CD8-positive, alpha-beta T cell (primary cell): ENCODE measurements at regions of chr19 and their contacts with region 1.

Region 1: GRCh38 chr19:43519436-43520088 is 7.4 kb downstream of the ETHE1 start:
- DNase-seq: peak; percentile 57 to 88 (median 82)
- ATAC-seq: peak; percentile 95
- H3K4me3 ChIP-seq: no peak overlapping the region
- H3K4me3 Mint-ChIP-seq: no peak overlapping the region
- H3K27ac ChIP-seq: no peak overlapping the region
- H3K27ac Mint-ChIP-seq: no peak overlapping the region
- H3K4me1 ChIP-seq: peaks cover 10% of the 10 kb centered on the region
- H3K4me1 Mint-ChIP-seq: peaks cover 13% of the 10 kb centered on the region
- H3K27me3 ChIP-seq: no peaks in the 10 kb centered on the region
- H3K27me3 Mint-ChIP-seq: no peaks in the 10 kb centered on the region
- CTCF ChIP-seq: peak; percentile 87

Region 2: DNA sequence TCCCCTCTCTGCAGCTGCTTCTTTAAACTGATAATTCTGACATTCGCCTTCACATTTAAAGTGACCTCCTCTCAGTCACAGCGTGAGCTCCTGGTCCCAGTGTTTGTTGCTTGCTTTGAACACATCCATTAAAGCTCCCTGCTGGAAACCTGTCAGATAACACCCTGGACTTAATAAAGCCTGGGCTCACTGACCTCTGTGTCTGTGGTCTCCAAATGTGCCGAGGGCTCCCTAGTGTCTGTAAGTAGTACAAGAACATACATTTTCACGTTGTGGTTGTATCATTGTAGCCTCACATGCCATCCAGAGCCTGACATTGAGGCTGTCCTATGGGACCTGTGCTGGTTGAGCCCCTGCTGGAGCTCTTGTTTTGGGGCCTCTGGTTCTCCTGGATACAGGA is 311.6 kb before region 1 on chr19:
- CTCF ChIA-PET with region 1: no interaction called
- POLR2A ChIA-PET with region 1: no interaction called
- intact Hi-C with region 1: loop called in 1 of 2 experiments (anchors 5 kb)
- DNase-seq: no peak
- ATAC-seq: no peak
- H3K4me3 ChIP-seq: no peak overlapping the region
- H3K4me3 Mint-ChIP-seq: no peak overlapping the region
- H3K27ac ChIP-seq: no peak overlapping the region
- H3K27ac Mint-ChIP-seq: no peak overlapping the region
- H3K4me1 ChIP-seq: no peaks in the 10 kb centered on the region
- H3K4me1 Mint-ChIP-seq: no peaks in the 10 kb centered on the region
- H3K27me3 ChIP-seq: no peaks in the 10 kb centered on the region
- H3K27me3 Mint-ChIP-seq: peaks cover 31% of the 10 kb centered on the region
- CTCF ChIP-seq: no peak

Region 3: DNA sequence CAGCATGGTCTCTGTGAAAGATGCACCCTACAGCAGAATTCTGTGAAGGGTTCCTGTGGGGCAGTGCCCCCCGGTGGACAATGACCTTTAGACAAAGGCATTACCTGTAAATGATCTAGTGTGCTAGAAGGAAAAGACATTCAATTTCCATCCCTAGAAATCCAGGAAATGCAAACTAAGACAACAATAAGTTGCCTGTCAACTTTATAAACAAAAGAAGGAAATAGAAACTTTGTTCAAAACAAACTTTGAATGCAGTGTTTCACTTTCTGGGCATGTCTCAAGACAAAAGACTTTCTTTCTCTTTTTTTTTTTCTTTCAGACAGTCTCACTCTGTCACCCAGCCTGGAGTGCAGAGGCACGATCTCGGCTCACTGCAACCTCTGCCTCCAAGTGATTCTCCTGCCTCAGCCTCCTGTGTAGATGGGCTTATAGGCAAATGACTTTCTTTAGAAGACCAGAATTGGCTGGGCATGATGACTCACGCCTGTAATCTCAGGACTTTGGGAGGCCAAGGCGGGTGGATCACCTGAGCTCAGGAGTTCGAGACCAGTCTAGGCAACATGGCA is 89.3 kb before region 1 on chr19:
- CTCF ChIA-PET with region 1: interaction called, 158 read pairs
- POLR2A ChIA-PET with region 1: interaction called, 6 read pairs
- intact Hi-C with region 1: loop called (anchors 1 kb)
- DNase-seq: peak in 1 of 9 experiments; percentile 48
- ATAC-seq: no peak
- H3K4me3 ChIP-seq: no peak overlapping the region
- H3K4me3 Mint-ChIP-seq: no peak overlapping the region
- H3K27ac ChIP-seq: no peak overlapping the region
- H3K27ac Mint-ChIP-seq: no peak overlapping the region
- H3K4me1 ChIP-seq: peaks cover 7% of the 10 kb centered on the region
- H3K4me1 Mint-ChIP-seq: peaks cover 18% of the 10 kb centered on the region
- H3K27me3 ChIP-seq: no peaks in the 10 kb centered on the region
- H3K27me3 Mint-ChIP-seq: no peaks in the 10 kb centered on the region
- CTCF ChIP-seq: no peak

Region 4: GRCh38 chr19:43446746-43447489 is 72.6 kb before region 1 on chr19:
- CTCF ChIA-PET with region 1: interaction called, 369 read pairs
- POLR2A ChIA-PET with region 1: interaction called, 36 read pairs
- intact Hi-C with region 1: loop called (anchors 1 kb)
- DNase-seq: peak; percentile 58 to 91 (median 82)
- ATAC-seq: peak; percentile 89
- H3K4me3 ChIP-seq: no peak overlapping the region
- H3K4me3 Mint-ChIP-seq: no peak overlapping the region
- H3K27ac ChIP-seq: no peak overlapping the region
- H3K27ac Mint-ChIP-seq: peak overlapping the region; percentile 87
- H3K4me1 ChIP-seq: peaks cover 5% of the 10 kb centered on the region
- H3K4me1 Mint-ChIP-seq: peaks cover 23% of the 10 kb centered on the region
- H3K27me3 ChIP-seq: no peaks in the 10 kb centered on the region
- H3K27me3 Mint-ChIP-seq: no peaks in the 10 kb centered on the region
- CTCF ChIP-seq: peak; percentile 97

Region 5: GRCh38 chr19:43457809-43458208 is 61.8 kb before region 1 on chr19:
- CTCF ChIA-PET with region 1: interaction called, 27 read pairs
- POLR2A ChIA-PET with region 1: interaction called, 10 read pairs
- intact Hi-C with region 1: no loop called
- DNase-seq: no peak
- ATAC-seq: no peak
- H3K4me3 ChIP-seq: no peak overlapping the region
- H3K4me3 Mint-ChIP-seq: no peak overlapping the region
- H3K27ac ChIP-seq: no peak overlapping the region
- H3K27ac Mint-ChIP-seq: no peak overlapping the region
- H3K4me1 ChIP-seq: peaks cover 8% of the 10 kb centered on the region
- H3K4me1 Mint-ChIP-seq: peaks cover 18% of the 10 kb centered on the region
- H3K27me3 ChIP-seq: no peaks in the 10 kb centered on the region
- H3K27me3 Mint-ChIP-seq: no peaks in the 10 kb centered on the region
- CTCF ChIP-seq: no peak

Region 6: GRCh38 chr19:43474986-43475705 is 44.4 kb before region 1 on chr19:
- CTCF ChIA-PET with region 1: interaction called, 12 read pairs
- POLR2A ChIA-PET with region 1: no interaction called
- intact Hi-C with region 1: no loop called
- DNase-seq: peak; percentile 92 to 99 (median 96)
- ATAC-seq: peak; percentile 84
- H3K4me3 ChIP-seq: peak overlapping the region; percentile 8 to 48
- H3K4me3 Mint-ChIP-seq: peak overlapping the region; percentile 82
- H3K27ac ChIP-seq: peak overlapping the region; percentile 72 to 89
- H3K27ac Mint-ChIP-seq: peak overlapping the region; percentile 97
- H3K4me1 ChIP-seq: peaks cover 48% of the 10 kb centered on the region
- H3K4me1 Mint-ChIP-seq: peaks cover 42% of the 10 kb centered on the region
- H3K27me3 ChIP-seq: no peaks in the 10 kb centered on the region
- H3K27me3 Mint-ChIP-seq: no peaks in the 10 kb centered on the region
- CTCF ChIP-seq: no peak

Region 7: DNA sequence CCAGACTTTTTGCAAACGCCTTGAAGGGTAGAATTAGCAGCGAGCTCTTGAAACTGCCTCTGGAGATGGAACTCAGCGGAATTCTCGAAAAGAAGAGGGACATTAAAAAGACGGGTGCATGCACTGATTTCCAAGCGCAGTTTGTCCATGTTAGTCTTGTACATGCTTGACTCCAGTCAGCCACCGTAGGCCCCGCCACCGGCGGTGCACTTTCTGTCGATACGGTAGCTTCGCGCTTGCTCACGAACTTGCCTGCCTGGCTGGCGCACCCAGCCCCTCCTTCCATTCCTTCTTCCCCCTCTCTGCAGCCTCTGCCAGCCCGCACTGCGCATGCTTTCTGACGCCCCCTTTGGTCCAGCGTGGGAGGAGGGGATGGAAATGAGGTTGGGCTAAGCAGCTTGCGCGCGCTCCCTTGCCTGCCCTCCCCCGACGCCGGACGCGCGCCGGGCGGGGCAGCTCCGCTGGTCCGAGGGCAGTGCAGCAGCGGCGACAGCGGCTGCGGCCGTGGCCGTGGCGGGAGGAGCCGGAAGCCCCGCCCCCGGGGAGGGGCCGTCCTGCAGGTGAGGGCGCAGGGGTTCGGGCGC is 13.5 kb after region 1 on chr19 and contains the start of gene ZNF575:
- CTCF ChIA-PET with region 1: interaction called, 40 read pairs
- POLR2A ChIA-PET with region 1: interaction called, 11 read pairs
- intact Hi-C with region 1: no loop called
- DNase-seq: peak; percentile 63 to 94 (median 87)
- ATAC-seq: peak; percentile 43
- H3K4me3 ChIP-seq: peak within 1 kb of the TSS; percentile 65 to 79
- H3K4me3 Mint-ChIP-seq: peak within 1 kb of the TSS; percentile 98
- H3K27ac ChIP-seq: peak within 1 kb of the TSS; percentile 55 to 76
- H3K27ac Mint-ChIP-seq: peak within 1 kb of the TSS; percentile 97
- H3K4me1 ChIP-seq: peaks cover 7% of the 10 kb centered on the region
- H3K4me1 Mint-ChIP-seq: peaks cover 19% of the 10 kb centered on the region
- H3K27me3 ChIP-seq: no peaks in the 10 kb centered on the region
- H3K27me3 Mint-ChIP-seq: no peaks in the 10 kb centered on the region
- CTCF ChIP-seq: no peak
- total RNA-seq, gene ZNF575: 2.4 to 3.4 TPM